ENCODE measurements at regions of chr11 and their contacts with region 1.

Region 1: GRCh38 chr11:65625628-65626342 is 10.2 kb downstream of the PCNX3 start:
- DNase-seq: peak; percentile 42 to 83 (median 54)
- ATAC-seq: peak; percentile 84
- H3K4me3 ChIP-seq: no peak overlapping the region
- H3K4me3 Mint-ChIP-seq: no peak overlapping the region
- H3K27ac ChIP-seq: no peak overlapping the region
- H3K27ac Mint-ChIP-seq: no peak overlapping the region
- H3K4me1 ChIP-seq: peaks cover 9% of the 10 kb centered on the region
- H3K4me1 Mint-ChIP-seq: peaks cover 13% of the 10 kb centered on the region
- H3K27me3 ChIP-seq: no peaks in the 10 kb centered on the region
- H3K27me3 Mint-ChIP-seq: no peaks in the 10 kb centered on the region
- CTCF ChIP-seq: peak; percentile 79

Region 2: GRCh38 chr11:65429724-65430405 is 195.9 kb before region 1 on chr11:
- CTCF ChIA-PET with region 1: no interaction called
- POLR2A ChIA-PET with region 1: no interaction called
- intact Hi-C with region 1: no loop called
- DNase-seq: peak in 8 of 14 experiments; percentile 44 to 79 (median 62)
- ATAC-seq: no peak
- H3K4me3 ChIP-seq: peak overlapping the region; percentile 86
- H3K4me3 Mint-ChIP-seq: peak overlapping the region; percentile 79
- H3K27ac ChIP-seq: peak overlapping the region; percentile 91 to 99
- H3K27ac Mint-ChIP-seq: peak overlapping the region; percentile 96
- H3K4me1 ChIP-seq: peaks cover 44% of the 10 kb centered on the region
- H3K4me1 Mint-ChIP-seq: peaks cover 91% of the 10 kb centered on the region
- H3K27me3 ChIP-seq: no peaks in the 10 kb centered on the region
- H3K27me3 Mint-ChIP-seq: no peaks in the 10 kb centered on the region
- CTCF ChIP-seq: no peak

Region 3: DNA sequence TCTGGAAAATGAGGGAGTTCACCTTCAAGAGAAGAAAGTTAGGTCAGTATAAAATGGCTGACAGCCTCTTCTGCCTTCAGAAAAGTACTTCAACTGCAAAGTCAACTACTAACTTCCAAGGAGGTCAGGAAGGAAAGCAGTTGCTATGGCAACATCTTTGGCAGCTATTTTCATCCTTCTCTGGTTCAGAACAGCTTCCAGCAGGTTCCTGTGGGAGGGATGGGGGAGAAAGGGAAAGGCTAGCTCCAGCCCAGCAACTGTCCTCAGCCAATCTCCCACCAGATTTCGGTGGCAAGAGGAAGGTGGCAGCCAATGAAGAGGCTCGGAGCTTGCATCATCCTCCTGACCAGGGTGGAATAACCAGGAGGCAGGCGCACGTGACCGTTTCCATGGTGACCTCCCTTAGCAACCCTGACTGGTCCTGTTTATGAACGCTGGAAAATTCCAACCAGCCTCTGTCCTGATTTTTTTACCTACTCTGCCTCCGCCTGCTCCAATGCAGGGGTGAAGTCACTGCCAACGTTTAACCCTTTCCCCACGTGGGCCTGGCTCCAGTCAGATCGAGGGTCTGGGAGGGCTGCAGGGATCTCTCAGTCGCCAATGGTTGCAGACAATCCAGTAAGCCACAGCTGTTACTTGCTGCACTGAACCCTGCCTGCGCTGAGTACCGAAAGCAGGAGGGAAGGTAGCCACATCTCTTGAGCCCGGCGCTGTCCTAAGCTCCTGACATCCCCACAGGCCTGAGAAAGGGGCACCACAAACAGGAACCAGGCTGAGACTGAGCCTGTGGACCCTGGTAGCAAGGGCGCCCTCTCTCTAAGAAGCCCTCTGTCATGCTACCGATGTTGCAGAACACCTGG is 138.1 kb before region 1 on chr11:
- CTCF ChIA-PET with region 1: no interaction called
- POLR2A ChIA-PET with region 1: no interaction called
- intact Hi-C with region 1: no loop called
- DNase-seq: peak in 4 of 14 experiments; percentile 34 to 80 (median 60)
- ATAC-seq: peak; percentile 59
- H3K4me3 ChIP-seq: no peak overlapping the region
- H3K4me3 Mint-ChIP-seq: peak overlapping the region; percentile 34
- H3K27ac ChIP-seq: no peak overlapping the region
- H3K27ac Mint-ChIP-seq: peak overlapping the region; percentile 58
- H3K4me1 ChIP-seq: peaks cover 28% of the 10 kb centered on the region
- H3K4me1 Mint-ChIP-seq: peaks cover 24% of the 10 kb centered on the region
- H3K27me3 ChIP-seq: no peaks in the 10 kb centered on the region
- H3K27me3 Mint-ChIP-seq: no peaks in the 10 kb centered on the region
- CTCF ChIP-seq: no peak

Region 4: GRCh38 chr11:65516135-65516935 is 109.5 kb before region 1 on chr11:
- CTCF ChIA-PET with region 1: no interaction called
- POLR2A ChIA-PET with region 1: no interaction called
- intact Hi-C with region 1: no loop called
- DNase-seq: no peak
- ATAC-seq: peak; percentile 24
- H3K4me3 ChIP-seq: no peak overlapping the region
- H3K4me3 Mint-ChIP-seq: no peak overlapping the region
- H3K27ac ChIP-seq: no peak overlapping the region
- H3K27ac Mint-ChIP-seq: peak overlapping the region; percentile 49
- H3K4me1 ChIP-seq: peaks cover 5% of the 10 kb centered on the region
- H3K4me1 Mint-ChIP-seq: peaks cover 11% of the 10 kb centered on the region
- H3K27me3 ChIP-seq: no peaks in the 10 kb centered on the region
- H3K27me3 Mint-ChIP-seq: no peaks in the 10 kb centered on the region
- CTCF ChIP-seq: no peak

Region 5: DNA sequence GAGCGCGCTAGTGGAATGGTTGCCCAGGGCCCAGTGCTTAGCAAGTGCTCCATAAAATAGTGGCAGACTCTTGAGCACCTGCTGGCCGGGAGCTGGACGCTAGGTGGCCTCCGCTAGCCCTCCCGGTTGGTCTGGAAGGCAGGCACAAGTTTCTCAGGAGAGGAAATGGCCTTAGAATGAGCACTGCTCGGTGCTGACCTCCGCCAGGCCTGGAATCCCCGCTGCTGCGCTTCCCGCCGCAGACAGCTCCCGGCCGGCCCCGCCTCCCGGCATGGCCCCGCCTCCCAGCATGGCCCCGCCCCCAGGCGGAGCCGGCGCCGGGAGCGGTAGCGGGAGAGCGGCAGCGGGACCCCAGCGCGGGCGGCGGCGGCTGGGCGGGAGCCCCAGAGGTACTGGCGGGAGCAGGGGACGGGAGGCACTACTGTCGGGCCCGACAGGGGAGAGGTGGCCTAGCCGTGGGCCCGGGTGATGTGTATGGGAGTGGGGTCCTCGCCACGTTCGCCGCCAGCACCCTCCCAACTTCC is 12.1 kb after region 1 on chr11 and contains the start of gene SIPA1:
- CTCF ChIA-PET with region 1: interaction called, 10 read pairs
- POLR2A ChIA-PET with region 1: interaction called, 4 read pairs
- intact Hi-C with region 1: no loop called
- DNase-seq: peak; percentile 50 to 90 (median 68)
- ATAC-seq: peak; percentile 43
- H3K4me3 ChIP-seq: peak within 1 kb of the TSS; percentile 100
- H3K4me3 Mint-ChIP-seq: peak within 1 kb of the TSS; percentile 97
- H3K27ac ChIP-seq: peak within 1 kb of the TSS; percentile 92 to 95
- H3K27ac Mint-ChIP-seq: peak within 1 kb of the TSS; percentile 100
- H3K4me1 ChIP-seq: peaks cover 74% of the 10 kb centered on the region
- H3K4me1 Mint-ChIP-seq: peaks cover 60% of the 10 kb centered on the region
- H3K27me3 ChIP-seq: no peaks in the 10 kb centered on the region
- H3K27me3 Mint-ChIP-seq: no peaks in the 10 kb centered on the region
- CTCF ChIP-seq: no peak
- total RNA-seq, gene SIPA1: 272 to 298 TPM

Region 6: DNA sequence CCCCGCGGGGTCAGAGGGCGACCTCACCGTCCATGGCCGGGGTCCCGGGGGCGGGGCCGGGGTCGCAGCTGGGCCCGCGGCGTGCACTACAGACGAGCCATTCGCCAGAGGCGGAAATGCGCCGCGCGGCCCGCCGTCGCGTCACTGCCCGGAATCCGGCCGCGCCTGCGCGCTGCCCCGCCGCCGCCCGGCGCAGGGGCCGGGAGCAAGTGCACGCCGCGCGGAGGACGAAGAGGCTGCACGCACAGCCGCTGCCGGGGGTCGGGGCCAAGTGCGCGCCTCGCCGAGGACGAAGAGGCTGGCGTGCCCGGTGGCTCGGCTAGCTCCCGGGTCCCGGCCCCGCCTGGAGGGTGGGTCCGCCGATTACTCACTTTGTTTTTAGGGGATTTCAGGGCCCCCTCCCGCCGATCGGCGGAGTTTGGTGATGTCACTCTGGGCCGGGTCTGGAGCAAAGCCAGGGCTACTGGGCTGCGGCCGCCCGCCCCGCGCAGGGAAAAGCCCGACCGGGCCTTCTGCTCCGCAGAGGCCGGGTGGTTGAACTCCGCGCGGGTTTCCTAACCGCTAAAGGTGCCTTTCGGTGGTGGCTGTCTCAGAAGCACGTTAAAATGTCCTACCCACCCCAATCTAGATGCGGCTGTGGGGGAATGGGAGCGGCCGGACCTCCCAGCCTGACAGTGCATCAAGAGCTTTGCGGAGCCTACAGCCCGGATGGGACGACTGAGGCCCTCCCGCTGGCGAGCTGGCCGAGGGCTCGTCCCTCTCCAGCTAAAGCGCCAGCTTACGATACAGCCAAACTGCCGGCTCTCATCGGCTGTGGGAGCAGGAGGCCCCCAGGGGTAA is 37.2 kb after region 1 on chr11 and contains the start of gene RELA:
- CTCF ChIA-PET with region 1: interaction called, 11 read pairs
- POLR2A ChIA-PET with region 1: no interaction called
- intact Hi-C with region 1: no loop called
- DNase-seq: peak; percentile 79 to 96 (median 89)
- ATAC-seq: peak; percentile 83
- H3K4me3 ChIP-seq: peak within 1 kb of the TSS; percentile 97
- H3K4me3 Mint-ChIP-seq: peak within 1 kb of the TSS; percentile 92
- H3K27ac ChIP-seq: peak within 1 kb of the TSS; percentile 96 to 97
- H3K27ac Mint-ChIP-seq: peak within 1 kb of the TSS; percentile 94
- H3K4me1 ChIP-seq: peaks cover 59% of the 10 kb centered on the region
- H3K4me1 Mint-ChIP-seq: peaks cover 33% of the 10 kb centered on the region
- H3K27me3 ChIP-seq: no peaks in the 10 kb centered on the region
- H3K27me3 Mint-ChIP-seq: no peaks in the 10 kb centered on the region
- CTCF ChIP-seq: no peak
- total RNA-seq, gene RELA: 379 to 382 TPM

Region 7: GRCh38 chr11:65770856-65771540 is 145.2 kb after region 1 on chr11:
- CTCF ChIA-PET with region 1: no interaction called
- POLR2A ChIA-PET with region 1: no interaction called
- intact Hi-C with region 1: loop called in 1 of 2 experiments (anchors 1 kb)
- DNase-seq: no peak
- ATAC-seq: no peak
- H3K4me3 ChIP-seq: no peak overlapping the region
- H3K4me3 Mint-ChIP-seq: no peak overlapping the region
- H3K27ac ChIP-seq: no peak overlapping the region
- H3K27ac Mint-ChIP-seq: no peak overlapping the region
- H3K4me1 ChIP-seq: no peaks in the 10 kb centered on the region
- H3K4me1 Mint-ChIP-seq: peaks cover 5% of the 10 kb centered on the region
- H3K27me3 ChIP-seq: no peaks in the 10 kb centered on the region
- H3K27me3 Mint-ChIP-seq: no peaks in the 10 kb centered on the region
- CTCF ChIP-seq: no peak

Region 8: DNA sequence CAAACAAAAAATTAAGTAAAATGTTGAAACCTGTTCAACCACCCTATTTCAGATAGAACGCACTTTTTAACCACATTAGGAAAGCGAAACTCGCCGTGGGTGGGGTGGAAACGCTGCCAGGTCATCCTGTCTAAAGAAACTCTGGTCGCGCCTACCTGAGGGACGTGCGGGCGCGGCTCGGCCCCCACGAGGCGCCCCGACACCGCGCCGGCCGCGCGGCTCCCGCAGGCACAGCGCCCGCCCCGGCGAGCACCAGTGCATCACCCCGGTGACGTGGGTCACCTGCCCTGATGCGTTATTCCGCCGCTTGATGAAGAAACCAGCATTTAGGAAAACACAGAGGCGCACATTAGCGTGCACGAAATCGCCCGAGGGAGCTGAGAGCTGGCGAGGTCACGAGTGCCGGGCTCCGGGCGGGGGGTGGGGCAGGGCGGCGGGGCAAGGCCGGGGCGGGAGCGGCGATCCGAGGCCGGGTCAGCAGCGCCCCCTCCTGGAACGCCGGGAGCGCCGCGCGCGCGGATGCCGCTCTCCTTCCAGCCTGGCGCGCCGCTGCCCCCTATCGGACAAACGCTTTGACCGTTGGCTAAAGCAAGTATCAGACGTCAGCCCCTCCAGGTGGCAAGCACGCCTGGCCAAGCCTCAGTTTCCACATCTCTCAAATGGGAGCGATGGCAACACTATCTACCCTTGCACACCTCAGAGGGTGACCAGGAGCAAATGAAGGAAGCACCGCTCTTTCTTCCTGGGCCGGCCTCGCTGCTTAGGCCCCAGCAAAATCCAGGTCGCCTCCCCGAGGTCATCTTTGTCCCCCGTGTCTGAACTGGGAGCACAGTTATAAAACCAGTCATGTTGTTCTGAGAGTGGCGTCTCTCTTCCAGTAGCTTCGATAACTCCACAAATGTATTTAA is 192.3 kb after region 1 on chr11:
- CTCF ChIA-PET with region 1: no interaction called
- POLR2A ChIA-PET with region 1: no interaction called
- intact Hi-C with region 1: loop called in 1 of 2 experiments (anchors 1 kb)
- DNase-seq: peak; percentile 84 to 98 (median 94)
- ATAC-seq: peak; percentile 89
- H3K4me3 ChIP-seq: peak overlapping the region; percentile 50
- H3K4me3 Mint-ChIP-seq: peak overlapping the region; percentile 81
- H3K27ac ChIP-seq: peak overlapping the region in 1 of 2 donors; percentile 35
- H3K27ac Mint-ChIP-seq: peak overlapping the region; percentile 67
- H3K4me1 ChIP-seq: peaks cover 16% of the 10 kb centered on the region
- H3K4me1 Mint-ChIP-seq: peaks cover 11% of the 10 kb centered on the region
- H3K27me3 ChIP-seq: no peaks in the 10 kb centered on the region
- H3K27me3 Mint-ChIP-seq: no peaks in the 10 kb centered on the region
- CTCF ChIP-seq: peak; percentile 99

Region 9: GRCh38 chr11:65988791-65989592 is 363.2 kb after region 1 on chr11:
- CTCF ChIA-PET with region 1: no interaction called
- POLR2A ChIA-PET with region 1: no interaction called
- intact Hi-C with region 1: loop called (anchors 2 to 10 kb)
- DNase-seq: peak; percentile 82 to 96 (median 89)
- ATAC-seq: peak; percentile 98
- H3K4me3 ChIP-seq: no peak overlapping the region
- H3K4me3 Mint-ChIP-seq: no peak overlapping the region
- H3K27ac ChIP-seq: no peak overlapping the region
- H3K27ac Mint-ChIP-seq: peak overlapping the region; percentile 61
- H3K4me1 ChIP-seq: peaks cover 10% of the 10 kb centered on the region
- H3K4me1 Mint-ChIP-seq: peaks cover 6% of the 10 kb centered on the region
- H3K27me3 ChIP-seq: no peaks in the 10 kb centered on the region
- H3K27me3 Mint-ChIP-seq: no peaks in the 10 kb centered on the region
- CTCF ChIP-seq: peak; percentile 96